Vagina (tissue), 2 donors: ENCODE measurements at regions of chr7 and their contacts with region 1.

Region 1: DNA sequence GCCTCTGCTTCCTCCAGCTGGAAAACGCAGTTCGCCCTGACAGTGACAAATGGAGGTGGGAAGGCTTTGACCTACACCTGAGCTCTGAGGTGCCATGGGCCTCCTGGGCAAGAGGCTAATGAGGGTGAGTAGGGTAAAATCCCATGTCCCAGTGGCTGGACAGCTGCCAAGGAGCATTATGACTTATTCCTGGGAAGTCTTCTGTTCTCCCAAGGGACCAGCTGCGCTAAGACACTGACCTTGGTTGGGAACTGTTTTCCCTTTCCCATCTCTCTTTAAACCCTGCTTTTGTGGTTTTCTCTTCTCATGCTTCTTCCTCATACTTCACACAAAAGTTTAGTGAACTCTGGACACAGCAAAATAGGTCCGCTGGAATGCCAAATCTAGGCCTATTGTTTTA is 72.6 kb downstream of the COPG2 start:
- DNase-seq: no peak
- H3K4me3 ChIP-seq: no peak overlapping the region
- H3K27ac ChIP-seq: no peak overlapping the region
- H3K4me1 ChIP-seq: no peaks in the 10 kb centered on the region
- H3K27me3 ChIP-seq: no peaks in the 10 kb centered on the region
- CTCF ChIP-seq: no peak
- POLR2A ChIP-seq: no peak

Region 2: DNA sequence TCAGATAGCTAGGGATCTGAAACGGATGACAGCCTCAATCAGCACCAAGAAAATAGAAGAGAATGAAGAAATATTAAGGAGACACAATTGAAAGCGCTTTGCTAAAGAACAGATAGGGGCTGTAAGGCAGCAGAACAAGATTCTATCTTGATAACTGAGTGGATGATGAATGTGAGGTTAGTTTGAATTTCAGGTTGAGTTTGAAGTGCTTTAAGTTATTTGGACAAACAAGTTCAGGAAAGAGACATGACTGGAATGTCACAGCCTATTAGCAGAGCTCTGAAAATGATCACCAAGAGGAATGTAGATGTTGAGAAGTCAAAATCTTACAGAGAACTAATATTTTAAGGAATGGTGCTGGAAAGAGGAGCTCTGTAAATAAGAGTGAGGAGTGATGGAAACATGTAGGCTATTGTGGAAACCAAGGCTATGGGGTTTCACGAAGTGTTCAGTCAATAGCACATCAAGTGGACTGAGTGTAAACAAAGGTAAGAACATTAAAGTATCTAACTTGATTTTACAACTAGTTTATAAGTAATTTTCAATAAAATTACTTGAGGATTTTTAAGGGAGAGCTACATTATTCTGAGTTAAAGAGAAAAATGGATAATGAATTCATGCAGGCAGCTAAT is 42.5 kb before region 1 on chr7:
- intact Hi-C with region 1: loop called (anchors 2 kb)
- DNase-seq: no peak
- H3K4me3 ChIP-seq: no peak overlapping the region
- H3K27ac ChIP-seq: no peak overlapping the region
- H3K4me1 ChIP-seq: no peaks in the 10 kb centered on the region
- H3K27me3 ChIP-seq: no peaks in the 10 kb centered on the region
- CTCF ChIP-seq: no peak
- POLR2A ChIP-seq: no peak